AG04450 (cell line): ENCODE measurements at regions of chr2 and their contacts with region 1.

Region 1: GRCh38 chr2:46296840-46297545 is at the start of gene EPAS1:
- DNase-seq: peak; percentile 43
- H3K4me3 ChIP-seq: peak within 1 kb of the TSS; percentile 97
- H3K27ac ChIP-seq: peak within 1 kb of the TSS; percentile 73
- H3K27me3 ChIP-seq: no peaks in the 10 kb centered on the region
- CTCF ChIP-seq: no peak
- polyA plus RNA-seq, gene EPAS1: 506 and 522 TPM in 2 replicates

Region 2: DNA sequence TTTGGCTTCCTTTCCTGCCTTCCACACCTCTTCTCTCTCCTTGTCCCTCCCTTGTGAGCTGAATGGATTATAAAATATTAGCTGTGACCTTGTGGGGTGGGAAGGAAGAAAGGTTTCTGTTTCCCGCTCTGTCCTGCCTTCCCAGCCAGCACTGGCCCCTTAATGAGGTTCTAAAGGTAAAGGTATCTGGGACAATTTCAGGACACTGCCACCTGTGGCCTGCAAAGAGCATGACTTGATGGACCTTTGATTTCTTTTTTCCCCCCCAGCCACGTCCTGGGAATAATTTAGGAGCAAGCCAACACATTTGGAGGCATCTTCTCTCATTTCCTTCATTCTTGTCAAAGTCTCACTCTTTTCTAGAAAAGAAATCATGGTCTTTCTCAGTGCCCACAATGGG is 246.5 kb before region 1 on chr2:
- CTCF ChIA-PET with region 1: interaction called, 10 read pairs
- POLR2A ChIA-PET with region 1: no interaction called
- DNase-seq: no peak
- H3K4me3 ChIP-seq: no peak overlapping the region
- H3K27ac ChIP-seq: no peak overlapping the region
- H3K27me3 ChIP-seq: no peaks in the 10 kb centered on the region
- CTCF ChIP-seq: no peak

Region 3: DNA sequence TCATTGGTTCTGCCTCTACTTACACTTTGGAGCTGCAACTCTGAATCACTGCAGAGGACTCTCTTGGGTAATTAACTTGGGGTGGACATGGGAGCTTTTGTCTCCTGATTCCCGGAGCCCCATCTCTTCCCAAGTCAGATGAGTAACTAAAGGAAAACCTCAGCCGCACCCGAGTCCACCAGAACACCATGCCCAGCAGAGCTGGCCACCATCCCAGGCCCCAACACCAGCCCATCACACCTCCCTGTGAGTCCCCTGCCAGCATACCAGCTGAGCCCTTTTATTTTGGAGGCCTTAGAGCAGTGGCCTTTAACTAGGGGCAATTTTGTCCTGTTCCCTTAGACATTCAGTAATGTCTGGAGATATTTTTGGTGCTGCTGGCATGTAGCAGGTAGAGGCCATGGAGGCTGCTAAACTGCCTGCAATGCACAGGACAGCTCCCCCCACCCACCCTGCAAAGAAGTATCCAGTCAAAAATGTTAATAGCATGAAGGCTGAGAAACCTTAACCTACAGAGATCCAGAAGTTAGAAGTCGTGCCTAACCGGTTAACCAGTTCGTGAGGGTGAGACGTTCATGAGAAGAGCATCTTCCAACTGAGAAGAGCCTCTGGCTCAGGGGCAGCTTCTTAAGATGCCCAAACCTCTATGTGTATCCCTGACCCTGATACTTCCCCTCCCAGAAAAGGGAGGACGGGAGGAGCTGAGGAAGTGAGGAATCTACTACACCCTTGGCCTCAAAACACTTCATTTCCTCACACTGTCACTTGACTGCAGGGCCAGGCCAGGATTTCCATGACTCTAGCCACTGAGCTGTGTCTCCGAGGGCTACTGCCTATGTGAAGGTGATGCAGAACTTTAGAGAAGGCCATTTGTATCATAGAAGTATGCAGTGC is 139.7 kb before region 1 on chr2:
- CTCF ChIA-PET with region 1: no interaction called
- POLR2A ChIA-PET with region 1: no interaction called
- DNase-seq: no peak
- H3K4me3 ChIP-seq: no peak overlapping the region
- H3K27ac ChIP-seq: no peak overlapping the region
- H3K27me3 ChIP-seq: no peaks in the 10 kb centered on the region
- CTCF ChIP-seq: no peak

Region 4: DNA sequence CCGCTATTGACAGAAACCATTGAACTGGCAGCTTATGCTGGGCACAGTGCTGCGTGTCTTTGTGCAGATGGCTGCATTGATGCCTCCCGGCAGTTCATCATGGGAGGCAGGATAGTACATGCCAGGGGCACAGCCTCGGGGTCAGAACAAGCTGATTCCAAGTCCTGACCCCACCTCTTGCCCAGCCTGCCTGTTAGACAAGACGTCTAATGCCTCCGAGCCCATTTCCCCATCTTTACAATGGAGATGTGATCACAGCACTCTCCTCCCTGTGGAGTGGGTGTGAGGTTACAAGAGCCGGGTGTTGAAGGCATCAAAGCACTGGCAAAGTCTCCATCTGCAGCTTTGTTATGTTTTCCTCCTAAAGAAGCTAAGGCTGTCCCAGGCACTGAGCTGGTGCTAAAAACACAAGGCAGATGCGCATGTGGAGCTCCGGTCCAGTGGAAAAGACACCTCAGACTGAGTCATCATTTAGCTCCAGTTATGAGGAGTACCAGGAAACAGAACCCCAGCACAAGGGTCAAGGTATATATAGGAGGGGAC is 125.5 kb before region 1 on chr2:
- CTCF ChIA-PET with region 1: interaction called, 3 read pairs
- POLR2A ChIA-PET with region 1: interaction called, 19 read pairs
- DNase-seq: peak; percentile 85
- H3K4me3 ChIP-seq: no peak overlapping the region
- H3K27ac ChIP-seq: peak overlapping the region; percentile 71
- H3K27me3 ChIP-seq: no peaks in the 10 kb centered on the region
- CTCF ChIP-seq: 0 out of 2 replicates have a peak, but pooled peaks have one; percentile 2

Region 5: GRCh38 chr2:46335391-46336282 is 38.6 kb after region 1 on chr2:
- CTCF ChIA-PET with region 1: no interaction called
- POLR2A ChIA-PET with region 1: interaction called, 12 read pairs
- DNase-seq: no peak
- H3K4me3 ChIP-seq: peak overlapping the region; percentile 51
- H3K27ac ChIP-seq: peak overlapping the region; percentile 99
- H3K27me3 ChIP-seq: no peaks in the 10 kb centered on the region
- CTCF ChIP-seq: no peak